ENCODE measurements at regions of chr9 and their contacts with region 1.

Region 1: DNA sequence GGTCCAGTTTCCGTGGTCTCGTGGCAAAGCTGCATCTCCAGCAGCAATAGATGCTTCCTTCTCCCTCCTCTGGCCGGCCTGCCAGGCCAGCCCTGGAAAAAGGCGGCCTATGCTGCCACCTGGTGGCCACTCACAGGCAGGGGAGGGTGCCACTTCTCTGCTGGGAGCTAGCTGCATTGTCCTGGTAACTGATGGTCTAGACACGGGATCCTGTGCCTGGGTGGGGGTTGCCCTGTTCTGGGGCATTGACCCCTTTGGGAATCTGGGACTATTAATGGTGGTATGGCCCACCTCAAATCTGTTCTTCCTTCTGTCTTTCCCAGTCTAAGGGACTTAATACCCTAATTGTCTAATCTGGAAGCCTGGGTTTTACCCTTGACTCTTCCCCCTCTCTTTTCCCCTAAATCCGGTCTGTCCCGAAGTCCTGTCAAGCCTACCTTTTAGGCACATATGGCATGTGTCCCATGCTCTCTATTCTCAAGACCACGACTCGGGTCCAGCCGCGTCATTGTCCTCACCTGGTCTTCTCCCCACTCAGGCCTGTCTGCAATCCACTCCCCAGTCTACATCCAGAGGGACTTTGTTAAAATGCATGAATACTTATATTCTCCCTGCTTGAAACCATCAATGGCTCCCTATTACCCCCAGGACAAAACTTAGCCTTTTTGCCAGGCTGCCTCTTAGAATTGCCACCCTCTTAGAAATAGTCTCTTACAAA is 20.0 kb upstream of the PTGS1 start:
- DNase-seq: peak; percentile 75 to 84
- ATAC-seq: peak; percentile 94 to 97
- H3K4me3 ChIP-seq: no peak overlapping the region
- H3K27ac ChIP-seq: no peak overlapping the region
- H3K4me1 ChIP-seq: peaks cover 4% of the 10 kb centered on the region; the same call in 2 of the 3 replicates
- CTCF ChIP-seq: peak; percentile 93
- EP300 ChIP-seq: no peak
- POLR2A ChIP-seq: no peak
- RAD21 ChIP-seq: peak; percentile 98

Region 2: GRCh38 chr9:122099271-122099869 is 251.4 kb before region 1 on chr9:
- CTCF ChIA-PET with region 1: interaction called, 232 read pairs
- POLR2A ChIA-PET with region 1: no interaction called
- DNase-seq: peak; percentile 69 to 71
- ATAC-seq: peak; percentile 81 to 92
- H3K4me3 ChIP-seq: no peak overlapping the region
- H3K27ac ChIP-seq: no peak overlapping the region
- H3K4me1 ChIP-seq: no peaks in the 10 kb centered on the region
- CTCF ChIP-seq: peak; percentile 89
- EP300 ChIP-seq: no peak
- POLR2A ChIP-seq: no peak
- RAD21 ChIP-seq: peak; percentile 82 to 84

Region 3: GRCh38 chr9:122144836-122145591 is 205.8 kb before region 1 on chr9:
- CTCF ChIA-PET with region 1: interaction called, 12 read pairs
- POLR2A ChIA-PET with region 1: no interaction called
- DNase-seq: no peak
- ATAC-seq: peak; percentile 77 to 79
- H3K4me3 ChIP-seq: no peak overlapping the region
- H3K27ac ChIP-seq: no peak overlapping the region
- H3K4me1 ChIP-seq: no peaks in the 10 kb centered on the region
- CTCF ChIP-seq: peak; percentile 43
- EP300 ChIP-seq: no peak
- POLR2A ChIP-seq: no peak
- RAD21 ChIP-seq: no peak

Region 4: GRCh38 chr9:122338994-122339393 is 11.8 kb before region 1 on chr9:
- CTCF ChIA-PET with region 1: interaction called, 61 read pairs
- POLR2A ChIA-PET with region 1: no interaction called
- DNase-seq: no peak
- ATAC-seq: peak in 1 of 2 experiments; percentile 10; a peak in 2 of 6 replicates
- H3K4me3 ChIP-seq: no peak overlapping the region
- H3K27ac ChIP-seq: no peak overlapping the region
- H3K4me1 ChIP-seq: no peaks in the 10 kb centered on the region
- CTCF ChIP-seq: no peak
- EP300 ChIP-seq: no peak
- POLR2A ChIP-seq: no peak
- RAD21 ChIP-seq: no peak

Region 5: GRCh38 chr9:122370869-122371755 is 20.3 kb after region 1 on chr9 and contains the start of gene PTGS1:
- CTCF ChIA-PET with region 1: interaction called, 31 read pairs
- POLR2A ChIA-PET with region 1: no interaction called
- DNase-seq: no peak
- ATAC-seq: no peak
- H3K4me3 ChIP-seq: no peak within 1 kb of the TSS
- H3K27ac ChIP-seq: no peak within 1 kb of the TSS
- H3K4me1 ChIP-seq: peaks cover 12% of the 10 kb centered on the region
- CTCF ChIP-seq: no peak
- EP300 ChIP-seq: no peak
- POLR2A ChIP-seq: no peak
- RAD21 ChIP-seq: no peak
- polyA plus RNA-seq, gene PTGS1: 0.41 and 0.49 TPM in 2 replicates

Measured in A549 (cell line).